ENCODE measurements at regions of chr1 and their contacts with region 1.

Region 1: GRCh38 chr1:166910396-166910994 is 34.4 kb upstream of the TADA1 start:
- DNase-seq: peak; percentile 74
- CTCF ChIP-seq: peak; percentile 82

Region 2: DNA sequence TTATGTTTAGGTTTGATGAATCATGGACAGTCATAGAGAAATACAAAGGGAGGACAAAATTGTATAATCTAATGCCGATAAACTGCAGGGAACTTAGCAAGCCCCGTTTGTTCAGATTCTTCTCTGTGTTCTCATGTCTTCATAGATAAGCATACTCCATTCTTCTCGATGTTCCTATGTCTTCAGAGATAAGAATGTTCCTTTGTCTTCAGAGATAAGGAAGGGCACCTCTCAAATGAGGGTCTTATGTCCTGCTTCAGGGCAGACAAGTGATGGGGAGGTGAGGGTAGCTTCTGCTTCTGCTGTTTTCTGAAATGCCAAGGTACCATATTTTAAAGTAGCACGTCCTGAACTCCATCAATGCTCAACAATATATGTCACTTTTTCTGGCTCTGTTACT is 14.7 kb before region 1 on chr1:
- CTCF ChIA-PET with region 1: interaction called, 39 read pairs
- POLR2A ChIA-PET with region 1: no interaction called
- DNase-seq: no peak
- CTCF ChIP-seq: no peak

Region 3: DNA sequence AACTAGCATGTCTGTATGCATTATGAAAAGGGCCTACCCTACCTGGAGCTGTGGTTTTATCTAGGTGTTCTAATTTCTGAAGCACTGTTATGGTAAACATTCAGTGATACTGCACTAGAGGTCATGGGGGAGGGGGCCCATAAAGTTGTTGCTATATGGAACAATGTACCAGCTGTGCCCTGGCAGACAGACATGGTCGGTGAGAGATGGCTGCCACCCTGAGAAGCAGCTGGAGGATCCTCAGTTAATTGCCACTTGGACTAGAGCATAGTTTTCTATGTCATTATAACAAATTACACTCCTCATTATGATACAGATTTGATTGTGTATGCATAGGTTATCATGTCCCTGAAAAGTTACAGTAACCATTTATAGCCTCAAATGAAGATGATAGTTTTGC is 19.4 kb after region 1 on chr1:
- CTCF ChIA-PET with region 1: interaction called, 21 read pairs
- POLR2A ChIA-PET with region 1: no interaction called
- DNase-seq: no peak
- CTCF ChIP-seq: no peak

Region 4: GRCh38 chr1:166969074-166969677 is 58.7 kb after region 1 on chr1:
- CTCF ChIA-PET with region 1: interaction called, 13 read pairs
- POLR2A ChIA-PET with region 1: no interaction called
- DNase-seq: no peak
- CTCF ChIP-seq: no peak

Region 5: DNA sequence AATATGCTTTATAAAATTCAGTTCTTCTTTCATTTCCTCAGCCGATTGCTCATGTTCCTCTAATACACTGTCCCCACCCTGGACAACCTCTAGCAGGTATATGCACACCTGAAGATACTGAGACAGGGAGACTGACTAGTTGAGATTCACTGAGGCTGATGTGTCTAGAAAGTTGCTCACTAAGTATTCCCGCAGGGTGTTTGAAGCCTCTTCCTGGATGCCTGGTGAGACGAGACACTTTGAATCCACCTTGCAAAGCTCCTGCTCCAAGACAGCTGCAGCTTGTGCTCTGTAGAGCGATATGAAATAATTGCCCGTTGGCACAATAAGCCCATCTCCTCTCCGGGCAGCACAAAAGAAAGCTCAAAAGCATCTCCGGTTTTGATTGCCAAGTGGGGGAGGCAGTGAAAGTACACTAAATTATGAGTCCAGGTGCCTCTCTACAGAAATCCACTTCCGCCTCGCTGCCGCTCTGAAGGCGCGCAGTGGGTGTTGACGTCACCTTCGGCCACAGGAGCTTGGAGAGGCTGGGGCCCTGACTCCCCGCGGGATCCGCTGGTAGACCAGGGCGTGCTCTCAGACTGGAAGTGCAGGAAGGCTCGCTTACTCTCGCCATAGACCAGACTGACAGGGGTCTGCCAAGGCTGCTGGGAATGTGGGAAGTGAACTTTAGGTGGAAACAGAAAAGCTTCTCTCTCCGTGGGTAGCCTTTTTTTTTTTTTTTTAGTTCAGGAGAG is 133.4 kb after region 1 on chr1:
- CTCF ChIA-PET with region 1: interaction called, 12 read pairs
- POLR2A ChIA-PET with region 1: no interaction called
- DNase-seq: peak; percentile 72
- CTCF ChIP-seq: no peak

Region 6: DNA sequence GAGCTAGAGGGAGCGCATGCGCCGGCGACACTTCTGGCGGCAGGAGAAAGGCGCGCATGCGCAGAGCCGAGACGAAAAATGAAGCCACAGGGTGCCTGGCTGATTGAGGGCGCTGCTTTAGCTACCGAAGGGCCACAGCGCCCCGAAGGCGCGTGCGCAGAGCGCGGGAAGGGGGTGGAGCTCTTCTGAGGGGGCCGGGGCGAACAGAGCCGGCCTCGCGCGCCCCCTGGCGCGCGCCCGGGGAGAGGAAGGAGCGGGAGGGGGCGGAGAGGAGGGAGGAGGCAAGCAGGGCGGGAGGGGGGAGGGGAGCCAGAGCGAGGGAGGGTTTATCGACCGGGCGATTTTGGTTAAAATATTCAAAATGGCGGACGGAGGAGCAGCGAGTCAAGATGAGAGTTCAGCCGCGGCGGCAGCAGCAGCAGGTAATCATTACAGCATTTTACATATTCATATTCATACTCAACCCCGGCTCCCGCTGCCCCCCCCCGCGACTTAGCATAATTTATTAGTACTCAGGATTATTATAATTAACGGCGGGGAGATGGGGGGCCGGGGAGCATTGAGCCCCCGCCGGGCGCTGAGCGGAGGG is 310.1 kb after region 1 on chr1 and contains the start of gene POU2F1:
- CTCF ChIA-PET with region 1: interaction called, 13 read pairs
- POLR2A ChIA-PET with region 1: no interaction called
- DNase-seq: peak; percentile 95
- CTCF ChIP-seq: peak; percentile 57